ENCODE measurements at regions of chr2 and their contacts with region 1.

Region 1: GRCh38 chr2:60818272-60818671 is 62.2 kb downstream of the PAPOLG start:
- DNase-seq: peak; percentile 33
- H3K4me3 Mint-ChIP-seq: no peak overlapping the region
- H3K27ac Mint-ChIP-seq: peak overlapping the region; percentile 90
- H3K4me1 Mint-ChIP-seq: peaks cover 45% of the 10 kb centered on the region
- H3K27me3 Mint-ChIP-seq: peaks cover 19% of the 10 kb centered on the region

Region 2: DNA sequence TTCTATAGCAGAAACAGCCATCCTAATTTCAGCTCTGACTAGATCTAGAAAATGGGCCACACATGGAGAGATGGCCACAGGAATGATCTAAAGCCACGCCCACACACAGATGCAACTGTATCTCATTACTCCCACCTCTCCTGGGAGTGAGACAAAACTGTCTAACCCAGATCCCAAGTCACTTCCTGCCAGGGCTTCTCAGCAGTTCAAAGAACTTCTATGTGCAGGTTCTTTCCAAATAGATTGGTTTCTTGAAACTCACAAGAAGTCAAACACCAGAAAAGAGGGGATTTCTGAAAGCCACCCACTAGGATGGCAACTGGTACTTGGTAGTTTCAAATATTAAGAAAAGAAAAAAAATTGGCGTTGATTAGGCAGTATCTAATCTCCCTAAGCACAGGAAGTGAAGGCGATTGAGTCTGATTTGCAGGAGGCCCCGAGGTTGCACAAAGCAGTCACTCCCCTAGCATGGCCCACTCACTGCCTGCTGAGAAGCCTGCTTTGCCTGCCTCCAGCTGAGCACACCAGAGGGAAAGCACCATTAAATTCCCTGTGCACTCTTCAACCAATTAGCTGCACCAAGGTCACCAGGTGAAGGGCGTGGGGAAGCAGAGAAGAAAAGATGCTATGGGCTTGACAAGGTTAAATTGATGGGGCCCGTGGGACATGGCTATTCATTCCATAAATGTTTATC is 11.1 kb before region 1 on chr2:
- CTCF ChIA-PET with region 1: interaction called, 11 read pairs
- DNase-seq: peak; percentile 42
- H3K4me3 Mint-ChIP-seq: no peak overlapping the region
- H3K27ac Mint-ChIP-seq: peak overlapping the region; percentile 86
- H3K4me1 Mint-ChIP-seq: peaks cover 38% of the 10 kb centered on the region
- H3K27me3 Mint-ChIP-seq: no peaks in the 10 kb centered on the region

Region 3: DNA sequence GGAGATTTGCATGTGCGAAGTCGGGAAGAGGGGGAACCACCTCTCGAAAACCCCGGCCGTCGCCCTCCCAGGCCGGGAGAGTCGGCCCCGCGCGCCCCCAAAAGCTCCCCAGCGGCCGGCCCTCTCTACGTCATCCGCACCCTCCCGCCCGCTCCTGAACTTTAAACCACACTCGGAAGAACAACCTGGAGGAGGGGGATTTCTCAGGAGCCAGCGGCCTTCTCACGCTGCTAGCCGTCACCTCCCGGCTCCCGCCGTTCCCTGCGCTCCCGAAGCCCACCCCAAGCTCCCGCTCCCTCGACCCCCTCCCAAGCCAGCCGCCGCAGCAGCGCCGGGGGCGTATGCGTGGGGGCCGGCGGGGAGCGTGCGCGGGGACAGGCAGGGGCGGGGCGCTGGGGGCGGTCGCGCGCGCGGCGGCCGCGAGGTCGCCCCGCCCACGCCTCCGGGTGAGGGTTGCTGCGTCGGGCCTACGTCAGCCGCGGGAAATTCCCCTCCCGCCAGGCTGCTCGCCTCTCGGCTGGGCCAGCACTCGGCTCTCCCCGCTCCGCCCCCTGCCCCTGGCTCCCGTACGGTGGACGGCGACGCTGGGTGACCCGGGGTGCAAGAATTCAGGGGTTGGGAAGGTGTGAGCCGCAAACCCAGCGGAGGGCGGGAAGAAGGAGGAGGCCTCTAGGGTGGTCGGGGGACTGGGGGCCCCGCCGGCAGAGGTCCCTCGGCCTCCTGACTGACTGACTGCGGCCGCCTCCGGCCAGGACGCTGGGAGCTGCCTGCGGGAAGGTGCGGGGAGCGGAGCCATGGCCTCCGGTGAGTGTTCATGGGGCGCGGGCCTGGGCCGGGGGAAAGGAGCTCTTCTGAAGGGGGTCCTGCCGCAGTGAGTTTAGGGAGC is 63.0 kb after region 1 on chr2 and contains the start of gene REL:
- CTCF ChIA-PET with region 1: interaction called, 14 read pairs
- DNase-seq: peak; percentile 93
- H3K4me3 Mint-ChIP-seq: peak within 1 kb of the TSS; percentile 93
- H3K27ac Mint-ChIP-seq: peak within 1 kb of the TSS; percentile 95
- H3K4me1 Mint-ChIP-seq: peaks cover 31% of the 10 kb centered on the region
- H3K27me3 Mint-ChIP-seq: peaks cover 4% of the 10 kb centered on the region

Region 4: DNA sequence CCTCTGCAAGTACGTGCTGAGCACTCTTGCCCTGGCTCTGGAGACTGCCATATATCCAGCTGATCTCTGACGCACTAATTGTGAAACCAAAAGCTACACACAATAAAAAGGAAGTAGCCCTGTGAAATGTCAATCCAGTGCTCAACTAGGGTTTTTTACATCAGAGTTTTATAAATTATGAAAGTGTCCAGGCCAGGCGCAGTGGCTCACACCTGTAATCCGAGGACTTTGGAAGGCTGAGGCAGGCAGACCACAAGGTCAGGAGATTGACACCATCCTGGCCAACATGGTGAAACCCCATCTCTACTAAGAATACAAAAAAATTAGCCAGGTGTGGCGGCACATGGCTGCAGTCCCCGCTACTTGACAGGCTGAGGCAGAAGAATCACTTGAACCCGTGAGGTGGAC is 174.7 kb after region 1 on chr2:
- CTCF ChIA-PET with region 1: interaction called, 15 read pairs
- DNase-seq: peak; percentile 23
- H3K4me3 Mint-ChIP-seq: no peak overlapping the region
- H3K27ac Mint-ChIP-seq: peak overlapping the region; percentile 13
- H3K4me1 Mint-ChIP-seq: peaks cover 16% of the 10 kb centered on the region
- H3K27me3 Mint-ChIP-seq: no peaks in the 10 kb centered on the region

Region 5: DNA sequence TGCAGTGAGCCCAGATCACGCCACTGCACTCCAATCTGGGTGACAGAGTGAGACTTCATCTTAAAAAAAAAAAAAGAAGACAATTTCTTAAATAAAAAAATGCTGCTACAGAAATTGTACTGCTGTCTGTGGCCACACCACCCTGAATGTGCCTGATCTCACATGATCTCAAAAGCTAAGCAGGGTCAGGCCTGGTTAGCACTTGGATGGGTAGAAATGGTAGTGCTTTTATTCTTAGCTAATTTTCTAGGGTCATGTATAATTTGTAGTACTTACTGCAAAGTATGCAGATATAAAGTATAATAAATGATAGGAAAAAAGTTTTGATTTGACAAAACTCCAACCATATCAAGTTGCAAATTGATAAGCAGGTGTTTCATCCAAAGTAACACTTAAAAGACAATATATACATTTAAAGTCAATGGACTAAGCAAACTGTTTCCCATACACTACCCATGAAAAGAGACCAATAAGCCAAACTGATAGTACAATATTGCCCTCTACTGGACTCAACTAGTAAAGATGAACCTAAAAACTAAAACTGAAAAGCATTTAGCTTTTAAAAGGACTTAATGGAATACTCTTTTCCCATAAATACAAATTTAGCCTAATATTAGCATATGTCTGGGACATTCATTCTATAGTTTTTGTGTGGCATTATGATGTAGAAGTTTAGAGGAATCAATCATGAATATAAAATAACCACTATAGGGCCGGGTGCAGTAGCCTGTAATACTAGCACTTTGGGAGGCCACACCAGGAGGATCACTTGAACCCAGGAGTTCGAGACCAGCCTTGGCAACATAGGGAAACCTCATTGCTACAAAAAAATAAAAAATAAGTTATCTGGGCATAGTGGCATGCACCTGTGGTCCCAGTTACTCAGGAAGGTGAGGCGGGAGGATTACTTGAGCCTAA is 180.6 kb after region 1 on chr2:
- CTCF ChIA-PET with region 1: interaction called, 15 read pairs
- DNase-seq: no peak
- H3K4me3 Mint-ChIP-seq: no peak overlapping the region
- H3K27ac Mint-ChIP-seq: no peak overlapping the region
- H3K4me1 Mint-ChIP-seq: no peaks in the 10 kb centered on the region
- H3K27me3 Mint-ChIP-seq: no peaks in the 10 kb centered on the region